ENCODE measurements at regions of chr6 and their contacts with region 1.

Region 1: DNA sequence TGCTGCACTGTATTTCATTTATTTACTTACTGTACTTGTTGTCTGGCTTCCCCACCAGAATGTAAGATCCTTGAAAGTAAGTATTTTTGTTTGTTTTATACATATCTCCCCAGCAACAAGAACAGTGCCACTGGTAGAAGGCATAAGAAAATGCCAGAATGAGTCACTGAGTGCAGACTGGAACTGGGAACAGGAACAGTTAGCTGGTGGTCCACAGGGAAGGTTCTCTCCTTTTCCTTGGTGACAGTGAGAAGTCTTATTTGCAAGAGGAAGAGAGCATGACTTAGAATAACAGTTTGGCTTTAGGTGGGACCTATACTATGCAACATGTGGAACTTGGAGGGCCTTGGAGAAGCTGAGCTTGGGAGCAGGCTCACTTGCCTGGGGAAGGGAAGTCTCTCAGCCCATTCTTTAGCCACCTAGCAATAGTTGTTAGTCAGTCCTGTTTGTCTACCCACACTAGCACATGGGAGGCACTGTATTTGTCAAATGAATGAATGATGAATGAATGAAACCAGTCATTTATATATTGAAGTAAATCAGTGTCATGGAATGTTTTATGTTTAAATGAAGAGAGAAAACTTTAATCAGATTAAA is 203.5 kb downstream of the KCNQ5 start:
- DNase-seq: no peak
- H3K4me3 Mint-ChIP-seq: no peak overlapping the region
- H3K27ac Mint-ChIP-seq: peak overlapping the region; percentile 81
- H3K4me1 Mint-ChIP-seq: peaks cover 15% of the 10 kb centered on the region
- H3K27me3 Mint-ChIP-seq: no peaks in the 10 kb centered on the region

Region 2: DNA sequence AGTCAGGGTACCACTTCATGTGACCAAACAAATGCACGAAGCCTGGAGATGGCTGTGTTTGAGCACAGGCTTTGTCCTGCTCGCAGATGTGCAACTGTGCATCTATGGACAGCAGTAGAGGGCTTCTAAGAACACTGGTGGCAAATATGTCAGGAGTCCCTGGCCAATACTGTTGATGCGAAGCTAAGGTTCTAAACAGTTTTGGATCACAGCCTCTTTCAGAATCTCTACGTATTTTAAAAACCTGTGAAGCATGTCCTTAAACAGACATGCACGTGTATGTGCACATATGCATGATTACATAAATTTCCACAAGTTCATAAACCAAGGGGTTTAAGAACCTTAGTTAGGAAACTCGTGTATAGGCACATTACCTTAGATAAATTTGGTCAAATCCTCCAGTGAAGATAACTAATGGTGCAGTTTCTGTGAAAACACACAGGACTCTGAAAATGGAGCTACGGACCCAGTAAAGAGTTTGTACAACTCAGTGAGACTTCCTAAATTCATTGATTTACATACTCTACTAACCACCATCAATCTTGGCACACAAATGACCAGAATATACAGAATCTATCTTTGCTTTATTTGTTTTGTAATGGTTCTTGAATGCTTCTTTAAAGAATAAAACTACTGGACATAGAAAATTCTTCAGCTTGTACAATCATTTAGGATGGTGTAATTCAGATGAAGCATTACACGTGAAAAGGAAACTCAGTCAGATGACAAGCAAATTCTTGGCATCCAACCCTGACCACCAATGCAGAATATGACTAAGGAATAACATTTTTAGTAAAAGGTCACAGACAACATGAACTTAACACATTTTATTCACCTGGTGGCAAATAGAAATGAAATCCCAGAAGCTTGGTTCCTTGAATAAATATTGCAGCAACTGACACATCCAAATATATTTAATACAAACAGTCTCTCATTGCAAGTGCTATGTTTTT is 176.1 kb before region 1 on chr6:
- intact Hi-C with region 1: loop called (anchors 1 kb)
- DNase-seq: no peak
- H3K4me3 Mint-ChIP-seq: no peak overlapping the region
- H3K27ac Mint-ChIP-seq: peak overlapping the region; percentile 22
- H3K4me1 Mint-ChIP-seq: peaks cover 18% of the 10 kb centered on the region
- H3K27me3 Mint-ChIP-seq: no peaks in the 10 kb centered on the region

Region 3: GRCh38 chr6:72740135-72740534 is 85.3 kb before region 1 on chr6:
- intact Hi-C with region 1: loop called (anchors 5 kb)
- DNase-seq: peak; percentile 59
- H3K4me3 Mint-ChIP-seq: no peak overlapping the region
- H3K27ac Mint-ChIP-seq: peak overlapping the region; percentile 0
- H3K4me1 Mint-ChIP-seq: peaks cover 31% of the 10 kb centered on the region
- H3K27me3 Mint-ChIP-seq: no peaks in the 10 kb centered on the region

Region 4: DNA sequence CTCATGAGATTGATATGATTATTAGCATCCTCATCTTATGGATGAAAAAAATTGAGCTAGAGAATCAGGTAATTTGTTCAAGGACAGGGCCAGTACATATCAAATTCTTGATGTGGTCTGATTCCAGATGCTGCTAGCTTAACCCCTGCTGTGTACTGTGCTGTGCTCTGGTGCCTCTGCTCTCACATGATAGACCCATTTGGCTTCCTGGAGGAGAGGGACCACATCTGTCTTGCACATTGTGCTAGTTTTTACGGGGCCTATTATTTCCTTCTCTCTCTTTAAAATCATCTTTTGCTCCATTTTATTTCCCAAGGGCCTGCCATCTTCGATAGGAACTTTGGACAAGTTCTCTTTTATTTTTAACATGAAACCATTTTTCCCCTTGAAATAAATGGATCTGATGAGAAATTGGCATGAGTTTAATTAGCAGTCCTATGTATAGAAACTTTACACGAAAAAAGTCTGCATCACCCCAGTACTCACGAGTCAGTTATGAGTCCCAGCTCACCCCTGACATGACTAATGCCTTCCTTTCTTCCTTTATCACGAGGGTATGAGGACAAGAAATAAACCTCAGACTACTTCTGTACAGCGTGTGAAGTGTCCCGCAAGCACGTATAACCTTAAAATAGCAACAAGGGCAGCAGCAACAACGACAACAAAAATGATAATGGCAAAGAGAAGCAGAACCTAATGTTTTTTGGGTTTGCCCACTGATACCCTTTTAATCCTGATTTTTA is 897.1 kb after region 1 on chr6:
- intact Hi-C with region 1: no loop called
- DNase-seq: peak; percentile 75
- H3K4me3 Mint-ChIP-seq: peak overlapping the region; percentile 68
- H3K27ac Mint-ChIP-seq: peak overlapping the region; percentile 87
- H3K4me1 Mint-ChIP-seq: peaks cover 39% of the 10 kb centered on the region
- H3K27me3 Mint-ChIP-seq: no peaks in the 10 kb centered on the region

Measured in activated CD4-positive, alpha-beta T cell treated with anti-CD3 and anti-CD28 coated beads, Interleukin-2, amount 10 ng/mL, durations not matched to agents 24 days and 14 days (primary cell).